Sigmoid colon (tissue), 7 donors: ENCODE measurements at regions of chr1 and their contacts with region 1.

Region 1: DNA sequence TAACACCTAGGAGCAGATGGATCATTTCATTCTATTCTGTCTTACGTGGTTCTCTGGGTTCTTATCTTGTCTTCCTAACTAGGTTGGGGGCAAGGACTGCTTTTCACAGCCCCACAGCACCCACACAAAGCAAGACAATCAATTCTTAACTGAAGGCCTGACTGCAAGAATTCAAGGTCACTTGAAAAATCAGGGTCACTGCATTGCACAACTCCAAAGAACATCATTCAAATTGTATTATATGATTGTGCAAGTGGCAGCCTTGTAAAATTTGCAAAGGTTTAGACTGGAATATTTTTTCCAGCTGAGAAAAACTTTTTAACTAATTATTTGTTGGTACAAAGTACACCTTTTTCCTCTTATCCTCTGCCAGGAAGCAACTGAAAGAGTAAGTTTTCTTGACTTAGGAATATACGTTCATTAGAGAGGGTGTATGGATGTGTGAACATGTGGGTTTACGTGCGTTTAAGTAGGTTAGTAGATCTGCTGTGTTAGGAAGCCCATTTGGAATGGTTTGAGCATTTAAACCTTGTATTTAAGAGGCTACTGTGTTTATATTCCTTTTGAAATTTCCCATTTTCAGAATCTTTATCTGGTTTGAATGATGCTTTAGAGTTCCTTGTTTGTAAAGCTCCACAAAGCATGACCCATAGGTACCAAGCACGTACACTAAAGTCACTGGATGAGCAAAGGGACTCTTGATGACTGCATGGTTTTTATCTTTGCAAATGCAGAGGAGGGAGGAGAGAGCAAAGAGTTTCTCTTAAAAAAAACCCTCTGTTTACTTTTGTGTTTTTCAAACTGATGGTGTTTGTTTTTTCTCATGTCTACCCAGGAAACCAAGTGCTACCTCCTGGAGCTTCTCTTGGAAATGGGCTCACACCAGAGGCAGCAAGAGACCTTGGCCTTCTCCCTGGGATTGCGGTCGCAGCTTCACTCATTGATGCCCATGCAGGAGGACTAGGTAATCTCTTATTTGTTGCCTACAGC is 214.9 kb downstream of the FGGY start:
- DNase-seq: no peak
- H3K4me3 ChIP-seq: no peak overlapping the region
- H3K27ac ChIP-seq: peak overlapping the region in 3 of 4 donors; percentile 30 to 41 (median 31)
- H3K4me1 ChIP-seq: peaks cover 0 to 72% (median 66%) of the 10 kb centered on the region in 4 donors
- H3K27me3 ChIP-seq: no peaks in the 10 kb centered on the region
- CTCF ChIP-seq: no peak
- EP300 ChIP-seq: no peak
- POLR2A ChIP-seq: no peak

Region 2: GRCh38 chr1:59393211-59394180 is 118.3 kb before region 1 on chr1:
- intact Hi-C with region 1: loop called (anchors 5 kb)
- DNase-seq: peak; percentile 95
- H3K4me3 ChIP-seq: no peak overlapping the region
- H3K27ac ChIP-seq: peak overlapping the region; percentile 78 to 88 (median 88)
- H3K4me1 ChIP-seq: peaks cover 0 to 37% (median 30%) of the 10 kb centered on the region in 4 donors
- H3K27me3 ChIP-seq: no peaks in the 10 kb centered on the region
- CTCF ChIP-seq: no peak
- EP300 ChIP-seq: peak in 3 of 4 donors; percentile 14 to 36 (median 16)
- POLR2A ChIP-seq: no peak

Region 3: DNA sequence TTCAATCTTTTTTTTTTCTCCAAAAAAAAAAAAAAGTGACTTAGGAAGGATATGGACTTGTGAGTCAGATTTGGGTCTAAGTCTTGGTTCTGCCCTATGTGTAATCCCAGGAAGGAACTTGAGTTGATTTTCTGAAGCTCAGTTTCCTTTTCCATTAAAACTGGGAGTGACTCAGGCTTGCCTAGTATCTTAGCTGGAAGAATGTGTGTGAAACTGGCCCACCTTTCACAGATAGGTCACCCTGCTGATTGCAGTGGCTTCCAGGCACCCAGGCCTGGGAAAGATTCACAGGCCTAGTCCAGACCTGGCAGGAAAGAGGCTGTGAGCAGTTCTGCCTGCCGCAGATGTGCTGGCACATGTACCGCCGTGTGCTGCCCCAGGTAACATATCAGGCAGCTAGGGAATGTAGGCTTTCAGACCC is 84.7 kb after region 1 on chr1:
- intact Hi-C with region 1: loop called (anchors 5 kb)
- DNase-seq: no peak
- H3K4me3 ChIP-seq: no peak overlapping the region
- H3K27ac ChIP-seq: peak overlapping the region; percentile 82 to 87 (median 82)
- H3K4me1 ChIP-seq: peaks cover 0 to 81% (median 61%) of the 10 kb centered on the region in 4 donors
- H3K27me3 ChIP-seq: no peaks in the 10 kb centered on the region
- CTCF ChIP-seq: no peak
- EP300 ChIP-seq: no peak
- POLR2A ChIP-seq: no peak

Region 4: DNA sequence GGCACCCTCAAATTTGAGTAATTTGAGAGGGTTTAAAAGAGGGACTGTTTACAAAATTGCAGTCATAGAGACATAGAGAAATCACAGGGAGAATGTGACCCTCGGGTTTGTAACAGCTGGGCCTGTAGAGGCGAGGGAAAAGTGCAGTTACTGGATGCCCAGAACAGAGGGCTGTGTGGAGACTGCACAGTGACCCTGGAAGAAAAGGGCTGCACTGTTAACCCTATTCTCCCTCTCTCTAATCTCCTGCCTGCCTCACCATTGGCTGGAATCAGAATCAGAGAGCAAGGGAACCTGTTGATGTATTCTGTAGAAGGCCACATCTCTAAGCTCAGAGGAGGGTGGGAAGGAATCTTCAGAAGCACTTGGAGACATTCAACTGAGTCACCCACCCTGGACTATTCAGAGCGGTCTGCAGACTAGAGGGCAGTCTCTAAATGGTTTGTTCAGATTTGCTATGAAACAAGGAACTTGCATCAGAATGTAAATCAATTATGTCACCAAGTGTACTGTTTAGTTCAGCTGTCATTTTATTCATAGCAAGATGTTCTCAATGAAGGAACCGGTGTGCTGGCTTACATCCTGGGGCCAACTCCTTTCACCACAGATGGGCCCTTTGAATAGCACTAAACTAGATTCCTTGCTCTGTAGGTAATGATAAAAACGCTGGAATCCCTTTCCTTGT is 170.8 kb after region 1 on chr1:
- intact Hi-C with region 1: loop called (anchors 5 kb)
- DNase-seq: peak; percentile 77
- H3K4me3 ChIP-seq: no peak overlapping the region
- H3K27ac ChIP-seq: peak overlapping the region; percentile 73 to 83 (median 79)
- H3K4me1 ChIP-seq: peaks cover 0 to 62% (median 33%) of the 10 kb centered on the region in 4 donors
- H3K27me3 ChIP-seq: no peaks in the 10 kb centered on the region
- CTCF ChIP-seq: no peak
- EP300 ChIP-seq: peak; percentile 41 to 91 (median 71)
- POLR2A ChIP-seq: no peak